Aorta (tissue), 5 donors: ENCODE measurements at regions of chr10 and their contacts with region 1.

Region 1: GRCh38 chr10:116272440-116273283 is at the start of gene GFRA1:
- DNase-seq: peak; percentile 54 to 85
- ATAC-seq: peak; percentile 39
- H3K4me3 ChIP-seq: peak within 1 kb of the TSS; percentile 50 to 68
- H3K27ac ChIP-seq: no peak within 1 kb of the TSS
- H3K4me1 ChIP-seq: no peaks in the 10 kb centered on the region
- H3K27me3 ChIP-seq: no peaks in the 10 kb centered on the region
- total RNA-seq, gene GFRA1: 10.3 to 27.1 TPM

Region 2: GRCh38 chr10:115963848-115964247 is 308.8 kb before region 1 on chr10:
- intact Hi-C with region 1: loop called in 1 of 2 experiments (anchors 10 kb)
- DNase-seq: no peak
- ATAC-seq: no peak
- H3K4me3 ChIP-seq: no peak overlapping the region
- H3K27ac ChIP-seq: no peak overlapping the region
- H3K4me1 ChIP-seq: peaks cover 0 to 2% of the 10 kb centered on the region in 2 donors
- H3K27me3 ChIP-seq: no peaks in the 10 kb centered on the region

Region 3: GRCh38 chr10:116132780-116133399 is 139.8 kb before region 1 on chr10:
- intact Hi-C with region 1: no loop called
- DNase-seq: no peak
- ATAC-seq: no peak
- H3K4me3 ChIP-seq: no peak overlapping the region
- H3K27ac ChIP-seq: no peak overlapping the region
- H3K4me1 ChIP-seq: no peaks in the 10 kb centered on the region
- H3K27me3 ChIP-seq: no peaks in the 10 kb centered on the region